Caco-2 (cell line): ENCODE measurements at regions of chr15 and their contacts with region 1.

Region 1: DNA sequence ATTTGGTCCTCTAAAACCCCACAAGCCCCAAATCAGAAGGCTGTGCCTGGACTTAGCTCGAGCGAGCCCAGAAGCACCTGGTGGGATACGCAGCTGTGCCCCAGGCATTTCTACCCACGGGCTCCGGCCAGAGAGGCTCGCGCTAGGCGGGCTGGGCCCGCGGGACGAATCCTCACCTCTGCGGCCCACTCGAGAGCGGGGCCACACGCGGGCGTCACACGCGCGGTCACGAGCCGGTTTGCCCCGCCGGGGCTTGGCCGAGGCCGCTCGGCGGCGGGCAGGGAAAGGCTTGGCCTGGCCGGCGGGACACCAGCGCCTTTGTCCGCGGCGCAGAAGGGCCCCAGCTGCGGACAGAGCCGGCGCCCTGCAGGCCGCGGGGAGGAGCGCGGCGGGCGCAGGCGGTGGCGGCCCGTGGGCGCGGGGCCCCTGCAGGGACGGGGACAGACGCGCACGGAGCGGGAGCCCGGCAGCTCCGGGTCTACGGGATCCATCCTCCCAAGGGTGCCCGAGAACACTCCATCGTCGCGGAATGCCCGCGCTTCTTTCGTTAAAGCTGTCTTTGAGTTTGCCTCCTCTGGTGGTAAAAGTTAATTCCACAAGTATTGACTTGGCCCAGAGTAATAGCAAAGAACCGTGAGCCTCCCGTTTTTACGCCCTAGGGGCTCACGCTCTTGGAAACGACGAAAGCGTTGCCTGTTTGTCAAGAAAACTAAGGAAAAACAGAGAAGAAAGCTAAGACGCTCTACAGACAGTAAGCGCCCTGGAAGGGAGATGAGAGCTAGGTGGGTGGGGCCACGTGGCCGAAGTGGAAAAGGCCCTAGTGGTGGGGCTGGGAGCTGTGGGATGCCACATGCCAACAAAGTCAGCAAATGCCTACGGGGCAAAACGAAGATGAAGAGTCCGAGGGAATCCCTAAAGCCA is 26.4 kb downstream of the TYRO3 start:
- DNase-seq: peak; percentile 82 to 89
- H3K4me3 ChIP-seq: peak overlapping the region; percentile 49
- H3K4me3 Mint-ChIP-seq: peak overlapping the region; percentile 79
- H3K27ac Mint-ChIP-seq: peak overlapping the region; percentile 92
- H3K4me1 ChIP-seq: peaks cover 51% of the 10 kb centered on the region
- H3K4me1 Mint-ChIP-seq: peaks cover 30% of the 10 kb centered on the region
- H3K27me3 ChIP-seq: no peaks in the 10 kb centered on the region
- H3K27me3 Mint-ChIP-seq: no peaks in the 10 kb centered on the region
- CTCF ChIP-seq: peak; percentile 42 to 44

Region 2: DNA sequence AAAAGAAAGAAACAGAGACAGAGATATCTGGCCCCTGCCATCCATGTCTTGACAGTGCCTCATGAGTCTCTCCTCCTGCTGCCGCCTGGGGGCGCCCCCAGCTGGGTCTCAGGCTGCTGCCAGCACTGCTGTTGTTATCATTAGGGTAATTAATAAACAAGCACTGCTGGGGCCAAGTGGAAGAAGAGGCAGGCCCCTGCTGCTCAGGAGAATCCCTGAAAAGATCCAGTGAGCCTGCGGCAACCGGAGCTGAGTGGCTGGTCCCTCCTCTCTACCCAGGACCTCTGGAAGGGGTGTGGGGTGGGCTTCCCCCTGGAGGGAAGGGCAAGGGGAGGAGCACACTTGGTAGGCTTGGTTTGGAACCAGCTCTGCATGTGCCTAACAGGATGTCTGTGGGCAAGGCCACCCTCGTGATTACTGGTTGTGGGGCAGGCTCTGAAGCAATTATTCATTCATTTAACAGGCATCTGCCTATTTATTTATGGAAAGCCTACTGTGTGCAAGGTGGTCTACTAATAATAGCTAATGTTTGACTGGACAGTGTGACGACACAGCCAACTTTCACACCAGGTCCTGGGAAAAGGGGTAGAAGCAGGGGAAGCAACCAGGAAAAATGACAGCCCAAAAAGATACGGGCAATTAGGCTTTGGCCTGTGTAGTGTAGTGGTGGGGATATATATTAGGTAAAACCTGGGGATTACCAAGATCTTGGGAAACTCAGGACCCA is 27.6 kb before region 1 on chr15:
- CTCF ChIA-PET with region 1: interaction called, 17 read pairs
- POLR2A ChIA-PET with region 1: interaction called, 5 read pairs
- intact Hi-C with region 1: loop called (anchors 2 kb)
- DNase-seq: peak; percentile 73 to 79
- H3K4me3 ChIP-seq: peak overlapping the region; percentile 56
- H3K4me3 Mint-ChIP-seq: peak overlapping the region; percentile 94
- H3K27ac Mint-ChIP-seq: peak overlapping the region; percentile 91
- H3K4me1 ChIP-seq: peaks cover 38% of the 10 kb centered on the region
- H3K4me1 Mint-ChIP-seq: peaks cover 27% of the 10 kb centered on the region
- H3K27me3 ChIP-seq: no peaks in the 10 kb centered on the region
- H3K27me3 Mint-ChIP-seq: no peaks in the 10 kb centered on the region
- CTCF ChIP-seq: peak; percentile 82 to 92

Region 3: DNA sequence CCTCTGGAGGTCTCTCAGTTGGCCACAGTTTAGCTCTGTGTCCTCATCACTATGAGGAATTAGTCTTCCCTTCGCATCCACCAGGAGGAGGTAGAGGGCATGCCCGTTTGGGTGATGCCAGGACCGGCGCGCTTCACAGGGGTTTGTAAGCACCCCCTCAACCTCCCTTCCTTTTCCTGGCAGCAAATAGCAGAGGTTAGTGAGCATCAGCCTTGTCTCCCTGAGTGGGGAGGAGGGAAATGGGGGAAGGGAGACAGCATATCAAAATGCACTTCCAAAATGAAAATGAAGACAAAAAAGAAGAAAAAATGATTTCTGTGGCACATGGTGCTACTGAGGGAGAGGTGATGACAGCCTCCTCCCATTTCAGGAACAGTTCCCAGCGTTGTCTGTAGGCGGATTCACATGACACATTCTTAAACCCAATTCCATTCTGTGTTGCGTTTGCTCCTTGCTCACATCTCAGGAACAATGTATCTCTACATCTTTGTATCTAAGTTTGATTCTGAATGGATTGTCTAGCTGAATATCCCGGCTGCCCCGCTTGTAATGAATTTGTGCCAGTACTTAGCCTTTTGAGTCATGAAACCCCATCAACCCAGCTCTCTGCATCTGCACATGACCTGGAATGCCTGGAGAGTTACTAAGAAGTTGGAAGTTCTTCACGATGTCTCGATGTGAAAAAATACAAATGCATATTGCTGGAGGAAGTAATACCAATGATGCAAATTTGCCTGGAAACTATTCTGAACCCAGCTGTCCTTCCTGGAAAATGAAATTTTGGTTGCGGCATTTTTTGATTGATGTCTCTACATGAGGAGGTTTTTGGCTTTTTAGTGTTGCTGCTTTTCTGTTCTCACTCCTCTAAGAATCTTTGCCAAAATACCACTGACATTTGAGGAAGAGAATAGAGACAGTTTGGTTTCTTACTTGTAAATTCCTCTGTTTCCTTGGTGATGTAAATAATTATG is 18.8 kb after region 1 on chr15:
- CTCF ChIA-PET with region 1: interaction called, 9 read pairs
- POLR2A ChIA-PET with region 1: interaction called, 9 read pairs
- intact Hi-C with region 1: loop called (anchors 1 kb)
- DNase-seq: peak; percentile 49 to 61
- H3K4me3 ChIP-seq: no peak overlapping the region
- H3K4me3 Mint-ChIP-seq: peak overlapping the region; percentile 25
- H3K27ac Mint-ChIP-seq: peak overlapping the region; percentile 74
- H3K4me1 ChIP-seq: peaks cover 49% of the 10 kb centered on the region
- H3K4me1 Mint-ChIP-seq: peaks cover 48% of the 10 kb centered on the region
- H3K27me3 ChIP-seq: no peaks in the 10 kb centered on the region
- H3K27me3 Mint-ChIP-seq: no peaks in the 10 kb centered on the region
- CTCF ChIP-seq: peak; percentile 42 to 51

Region 4: GRCh38 chr15:41637086-41637485 is 51.7 kb after region 1 on chr15:
- CTCF ChIA-PET with region 1: no interaction called
- POLR2A ChIA-PET with region 1: no interaction called
- intact Hi-C with region 1: no loop called
- DNase-seq: no peak
- H3K4me3 ChIP-seq: no peak overlapping the region
- H3K4me3 Mint-ChIP-seq: no peak overlapping the region
- H3K27ac Mint-ChIP-seq: peak overlapping the region; percentile 5
- H3K4me1 ChIP-seq: peaks cover 28% of the 10 kb centered on the region
- H3K4me1 Mint-ChIP-seq: peaks cover 25% of the 10 kb centered on the region
- H3K27me3 ChIP-seq: no peaks in the 10 kb centered on the region
- H3K27me3 Mint-ChIP-seq: no peaks in the 10 kb centered on the region
- CTCF ChIP-seq: no peak

Region 5: DNA sequence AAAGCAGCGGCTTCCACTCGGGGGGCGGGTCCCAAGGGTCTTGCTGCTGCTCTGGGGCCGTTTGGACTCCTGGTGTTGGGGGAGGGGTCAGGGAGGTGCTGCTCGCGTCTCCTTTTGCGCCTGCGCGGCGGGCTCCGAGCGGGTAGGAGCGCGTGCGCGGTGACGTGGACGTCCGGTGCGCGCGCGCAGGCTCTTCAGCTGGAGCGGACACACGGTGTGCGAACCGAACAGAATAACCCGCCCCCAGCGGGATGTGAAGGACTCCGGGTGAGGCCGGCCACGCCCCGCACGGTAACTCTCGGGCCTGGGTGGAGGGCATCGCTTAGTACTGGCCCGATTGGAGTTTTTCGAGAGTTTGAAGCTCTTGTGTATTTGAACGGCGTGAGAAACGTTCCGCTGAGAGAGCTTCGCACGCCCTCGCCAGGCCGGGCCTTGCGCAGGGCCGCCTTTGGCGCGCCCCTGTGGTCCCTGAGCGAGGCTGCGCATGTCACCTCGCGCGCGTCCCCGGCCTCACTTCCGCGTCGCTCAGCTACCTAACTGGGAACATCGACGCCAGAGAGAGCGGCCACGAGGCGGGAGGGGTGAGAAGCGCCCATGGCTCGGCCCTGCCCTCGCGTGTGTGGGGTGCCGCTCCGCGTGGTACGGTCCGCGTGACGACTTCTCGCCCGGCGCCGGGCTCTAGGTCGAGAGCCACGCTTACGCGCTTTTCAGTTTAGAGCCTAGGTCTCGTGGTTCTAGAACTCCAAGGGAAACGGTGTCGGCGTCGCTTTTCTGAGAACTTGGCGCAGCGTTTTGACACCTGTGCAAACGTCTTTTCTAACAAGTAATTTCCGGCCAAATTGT is 75.1 kb after region 1 on chr15 and contains the start of gene MGA:
- CTCF ChIA-PET with region 1: interaction called, 4 read pairs
- POLR2A ChIA-PET with region 1: interaction called, 19 read pairs
- intact Hi-C with region 1: loop called (anchors 1 kb)
- DNase-seq: peak; percentile 95 to 96
- H3K4me3 ChIP-seq: peak within 1 kb of the TSS; percentile 87
- H3K4me3 Mint-ChIP-seq: peak within 1 kb of the TSS; percentile 92
- H3K27ac Mint-ChIP-seq: peak within 1 kb of the TSS; percentile 88
- H3K4me1 ChIP-seq: peaks cover 18% of the 10 kb centered on the region
- H3K4me1 Mint-ChIP-seq: peaks cover 22% of the 10 kb centered on the region
- H3K27me3 ChIP-seq: no peaks in the 10 kb centered on the region
- H3K27me3 Mint-ChIP-seq: no peaks in the 10 kb centered on the region
- CTCF ChIP-seq: peak in 1 of 2 experiments; percentile 23
- total RNA-seq, gene MGA: 59.6 and 60.0 TPM in 2 replicates

Region 6: DNA sequence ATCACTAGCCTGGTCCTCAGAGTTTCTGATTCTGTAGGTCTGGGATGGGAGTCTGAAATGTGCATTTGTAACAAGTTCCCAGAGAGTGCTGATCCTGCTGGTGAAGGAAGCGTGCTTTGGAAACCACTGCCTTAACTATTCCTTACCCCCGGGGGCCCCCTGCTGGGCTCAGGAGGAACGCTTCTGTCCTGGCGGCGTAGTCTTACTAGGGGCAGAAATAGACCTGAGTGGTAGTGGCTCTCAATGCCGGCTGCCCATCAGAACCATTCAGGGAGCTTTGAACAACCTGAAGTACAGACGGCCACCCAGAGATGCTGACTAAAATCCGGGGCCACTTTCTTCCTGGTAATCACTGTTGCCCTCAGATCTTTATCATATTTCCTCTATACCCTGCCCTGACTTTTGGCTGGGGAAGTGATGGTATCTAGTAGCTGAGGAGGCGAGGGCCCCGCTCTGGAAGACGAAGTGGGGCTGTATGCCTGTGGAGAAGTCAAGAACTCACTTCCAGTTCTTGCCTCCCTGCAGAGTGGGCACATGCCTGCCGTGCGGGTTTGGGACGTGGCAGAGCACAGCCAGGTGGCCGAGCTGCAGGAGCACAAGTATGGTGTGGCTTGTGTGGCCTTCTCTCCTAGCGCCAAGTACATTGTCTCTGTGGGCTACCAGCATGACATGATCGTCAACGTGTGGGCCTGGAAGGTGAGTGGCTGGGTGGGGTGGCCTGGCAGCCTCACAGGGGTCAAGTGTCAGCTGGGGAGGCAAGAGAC is 226.2 kb after region 1 on chr15:
- CTCF ChIA-PET with region 1: interaction called, 14 read pairs
- POLR2A ChIA-PET with region 1: no interaction called
- intact Hi-C with region 1: no loop called
- DNase-seq: peak; percentile 79 to 86
- H3K4me3 ChIP-seq: no peak overlapping the region
- H3K4me3 Mint-ChIP-seq: no peak overlapping the region
- H3K27ac Mint-ChIP-seq: no peak overlapping the region
- H3K4me1 ChIP-seq: no peaks in the 10 kb centered on the region
- H3K4me1 Mint-ChIP-seq: no peaks in the 10 kb centered on the region
- H3K27me3 ChIP-seq: no peaks in the 10 kb centered on the region
- H3K27me3 Mint-ChIP-seq: no peaks in the 10 kb centered on the region
- CTCF ChIP-seq: peak; percentile 87 to 90